ENCODE measurements at regions of chr2 and their contacts with region 1.

Region 1: GRCh38 chr2:224679264-224679634 is 36.9 kb downstream of the CCDC195 start:
- DNase-seq: no peak
- ATAC-seq: no peak
- H3K4me3 ChIP-seq: no peak overlapping the region
- H3K4me3 Mint-ChIP-seq: no peak overlapping the region
- H3K27ac ChIP-seq: no peak overlapping the region
- H3K27ac Mint-ChIP-seq: no peak overlapping the region
- H3K4me1 ChIP-seq: no peaks in the 10 kb centered on the region
- H3K4me1 Mint-ChIP-seq: no peaks in the 10 kb centered on the region
- H3K27me3 ChIP-seq: no peaks in the 10 kb centered on the region
- H3K27me3 Mint-ChIP-seq: no peaks in the 10 kb centered on the region

Region 2: GRCh38 chr2:223779877-223780276 is 899.4 kb before region 1 on chr2:
- CTCF ChIA-PET with region 1: no interaction called
- POLR2A ChIA-PET with region 1: interaction called in 1 of 2 experiments, 10 read pairs
- DNase-seq: peak in 26 of 35 experiments; percentile 3 to 62 (median 12)
- ATAC-seq: peak in 3 of 4 experiments; percentile 17 to 54 (median 19)
- H3K4me3 ChIP-seq: no peak overlapping the region
- H3K4me3 Mint-ChIP-seq: no peak overlapping the region
- H3K27ac ChIP-seq: no peak overlapping the region
- H3K27ac Mint-ChIP-seq: no peak overlapping the region
- H3K4me1 ChIP-seq: no peaks in the 10 kb centered on the region
- H3K4me1 Mint-ChIP-seq: no peaks in the 10 kb centered on the region
- H3K27me3 ChIP-seq: no peaks in the 10 kb centered on the region
- H3K27me3 Mint-ChIP-seq: peaks cover 0 to 3% of the 10 kb centered on the region in 2 donors

Region 3: GRCh38 chr2:224723586-224724217 is 44.5 kb after region 1 on chr2:
- CTCF ChIA-PET with region 1: no interaction called
- POLR2A ChIA-PET with region 1: no interaction called
- DNase-seq: no peak
- ATAC-seq: no peak
- H3K4me3 ChIP-seq: no peak overlapping the region
- H3K4me3 Mint-ChIP-seq: no peak overlapping the region
- H3K27ac ChIP-seq: no peak overlapping the region
- H3K27ac Mint-ChIP-seq: no peak overlapping the region
- H3K4me1 ChIP-seq: no peaks in the 10 kb centered on the region
- H3K4me1 Mint-ChIP-seq: no peaks in the 10 kb centered on the region
- H3K27me3 ChIP-seq: peaks cover 0 to 6% of the 10 kb centered on the region in 2 experiments
- H3K27me3 Mint-ChIP-seq: peaks cover 10 to 12% of the 10 kb centered on the region in 2 donors